Activated CD4-positive, alpha-beta T cell treated with anti-CD3 and anti-CD28 coated beads, Interleukin-2, amount 10 ng/mL, durations not matched to agents 24 days and 14 days (primary cell): ENCODE measurements at regions of chr20 and their contacts with region 1.

Region 1: GRCh38 chr20:3888622-3889488 is at the start of gene PANK2:
- DNase-seq: peak; percentile 100
- H3K4me3 Mint-ChIP-seq: peak within 1 kb of the TSS; percentile 100
- H3K27ac Mint-ChIP-seq: peak within 1 kb of the TSS; percentile 99
- H3K4me1 Mint-ChIP-seq: peaks cover 45% of the 10 kb centered on the region
- H3K27me3 Mint-ChIP-seq: no peaks in the 10 kb centered on the region
- total RNA-seq, gene PANK2: 45.4 and 52.2 TPM in 2 replicates

Region 2: GRCh38 chr20:3786665-3787323 is 102.1 kb before region 1 on chr20 and contains the start of gene CENPB:
- intact Hi-C with region 1: loop called (anchors 2 kb)
- DNase-seq: peak; percentile 98
- H3K4me3 Mint-ChIP-seq: peak within 1 kb of the TSS; percentile 87
- H3K27ac Mint-ChIP-seq: peak within 1 kb of the TSS; percentile 79
- H3K4me1 Mint-ChIP-seq: peaks cover 32% of the 10 kb centered on the region
- H3K27me3 Mint-ChIP-seq: no peaks in the 10 kb centered on the region
- total RNA-seq, gene CENPB: 72.8 and 74.4 TPM in 2 replicates

Region 3: GRCh38 chr20:3911956-3912355 is 23.1 kb after region 1 on chr20:
- intact Hi-C with region 1: loop called (anchors 1 kb)
- DNase-seq: no peak
- H3K4me3 Mint-ChIP-seq: no peak overlapping the region
- H3K27ac Mint-ChIP-seq: no peak overlapping the region
- H3K4me1 Mint-ChIP-seq: peaks cover 37% of the 10 kb centered on the region
- H3K27me3 Mint-ChIP-seq: no peaks in the 10 kb centered on the region

Region 4: DNA sequence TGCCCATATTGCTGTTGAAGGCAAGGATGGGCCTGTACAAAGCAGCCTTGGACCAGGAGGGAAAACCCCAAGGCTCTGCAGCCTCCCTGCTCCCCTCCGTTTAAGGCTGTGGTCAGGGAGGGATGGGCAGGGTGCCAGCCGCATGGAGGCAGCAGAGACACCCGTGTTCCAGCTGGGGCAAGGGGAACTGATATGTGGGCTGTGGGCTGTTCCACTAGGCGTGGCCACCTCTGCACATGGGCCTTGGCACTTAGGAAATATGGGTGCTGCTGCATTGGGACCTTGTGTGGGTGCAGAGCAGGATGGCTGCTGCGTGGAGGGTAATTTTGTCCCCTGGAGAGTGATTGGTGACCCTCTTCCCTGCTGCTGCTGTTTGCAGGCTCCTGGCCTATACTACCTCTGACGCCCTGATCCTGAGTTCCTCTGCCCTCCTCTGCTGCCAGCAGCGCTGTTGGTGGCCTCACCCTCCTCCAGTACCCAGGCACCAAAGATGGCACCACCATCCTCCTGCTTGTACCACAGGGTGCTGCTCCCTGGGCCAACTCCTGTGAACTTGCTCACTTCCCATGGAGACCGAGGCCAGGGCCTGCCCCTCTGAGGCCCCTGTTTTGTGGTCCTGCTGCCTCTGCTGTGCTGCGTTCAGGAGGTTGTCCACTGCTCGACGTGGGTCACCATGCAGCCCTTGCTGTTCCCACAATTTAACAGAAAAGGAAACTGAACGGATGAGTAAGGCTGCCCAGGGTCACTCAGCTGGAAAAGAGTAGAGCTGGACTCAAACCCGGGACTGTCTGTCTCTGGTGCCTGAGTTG is 35.7 kb after region 1 on chr20:
- intact Hi-C with region 1: loop called (anchors 5 kb)
- DNase-seq: peak; percentile 55
- H3K4me3 Mint-ChIP-seq: no peak overlapping the region
- H3K27ac Mint-ChIP-seq: peak overlapping the region; percentile 49
- H3K4me1 Mint-ChIP-seq: peaks cover 29% of the 10 kb centered on the region
- H3K27me3 Mint-ChIP-seq: no peaks in the 10 kb centered on the region